Natural killer cell (primary cell): ENCODE measurements at regions of chr15 and their contacts with region 1.

Region 1: DNA sequence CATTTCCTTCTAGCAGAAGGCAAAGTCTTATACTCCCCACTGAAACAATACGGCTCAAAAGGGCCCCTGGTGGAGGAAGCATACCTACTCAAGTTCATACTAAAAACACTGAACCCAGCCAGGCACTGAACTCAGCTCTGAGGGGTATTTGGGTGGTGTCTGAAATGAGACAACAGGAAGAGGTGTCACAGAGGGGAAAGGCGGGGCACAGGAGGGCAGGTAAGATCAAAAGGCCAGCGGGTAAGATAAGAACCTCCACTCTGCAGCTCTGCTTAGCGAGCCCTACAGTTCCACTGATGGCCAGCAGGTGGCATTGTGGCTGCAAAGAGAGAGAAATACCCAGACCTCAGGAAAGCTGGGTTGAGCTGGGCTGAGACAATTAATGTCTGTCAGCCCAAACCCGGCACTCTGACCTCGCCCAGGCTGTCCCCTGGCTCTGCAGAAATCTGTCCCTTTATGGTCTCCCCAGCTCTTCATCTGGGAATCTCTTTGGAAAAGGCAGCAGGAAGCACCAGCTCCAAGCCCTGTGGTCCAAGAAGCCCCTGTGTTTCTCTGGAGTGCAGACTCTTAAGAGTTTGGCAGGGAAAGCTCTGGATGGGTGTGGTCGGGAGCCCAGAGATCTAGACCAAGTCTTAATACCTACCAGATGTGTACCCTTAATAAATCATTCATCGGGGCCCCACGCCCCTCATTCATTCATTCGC is 8.4 kb downstream of the MFGE8 start:
- DNase-seq: peak; percentile 74 to 97
- ATAC-seq: peak; percentile 87 to 95 (median 90)
- H3K4me3 ChIP-seq: no peak overlapping the region
- H3K4me3 Mint-ChIP-seq: no peak overlapping the region
- H3K27ac ChIP-seq: peak overlapping the region; percentile 54
- H3K27ac Mint-ChIP-seq: no peak overlapping the region
- H3K4me1 ChIP-seq: peaks cover 15% of the 10 kb centered on the region
- H3K4me1 Mint-ChIP-seq: peaks cover 7 to 14% of the 10 kb centered on the region in 2 donors
- H3K27me3 ChIP-seq: no peaks in the 10 kb centered on the region
- H3K27me3 Mint-ChIP-seq: no peaks in the 10 kb centered on the region
- CTCF ChIP-seq: peak; percentile 98

Region 2: GRCh38 chr15:89017370-89018066 is 112.7 kb after region 1 on chr15:
- intact Hi-C with region 1: loop called (anchors 1 kb)
- DNase-seq: peak; percentile 74 to 92
- ATAC-seq: peak; percentile 85 to 97 (median 93)
- H3K4me3 ChIP-seq: no peak overlapping the region
- H3K4me3 Mint-ChIP-seq: peak overlapping the region; percentile 80
- H3K27ac ChIP-seq: no peak overlapping the region
- H3K27ac Mint-ChIP-seq: peak overlapping the region; percentile 44 to 61
- H3K4me1 ChIP-seq: peaks cover 12% of the 10 kb centered on the region
- H3K4me1 Mint-ChIP-seq: peaks cover 8 to 11% of the 10 kb centered on the region in 2 donors
- H3K27me3 ChIP-seq: no peaks in the 10 kb centered on the region
- H3K27me3 Mint-ChIP-seq: peaks cover 27 to 54% of the 10 kb centered on the region in 2 donors
- CTCF ChIP-seq: peak; percentile 68